ENCODE measurements at regions of chr11 and their contacts with region 1.

Region 1: GRCh38 chr11:65888163-65888814 is at the start of gene FIBP:
- DNase-seq: peak; percentile 98
- ATAC-seq: peak; percentile 84
- total RNA-seq, gene FIBP: 44.9 TPM

Region 2: GRCh38 chr11:65961232-65961901 is 73.1 kb after region 1 on chr11 and contains the start of gene SART1:
- intact Hi-C with region 1: no loop called
- DNase-seq: peak; percentile 98
- ATAC-seq: peak; percentile 99
- total RNA-seq, gene SART1: 32.2 TPM

Region 3: GRCh38 chr11:65988791-65989592 is 100.7 kb after region 1 on chr11:
- intact Hi-C with region 1: loop called (anchors 10 kb)
- DNase-seq: peak; percentile 73
- ATAC-seq: peak; percentile 98

Region 4: GRCh38 chr11:66251809-66252208 is 363.5 kb after region 1 on chr11:
- intact Hi-C with region 1: no loop called
- DNase-seq: no peak
- ATAC-seq: no peak